ENCODE measurements at regions of chr17 and their contacts with region 1.

Region 1: GRCh38 chr17:27879987-27880608 is 13.1 kb downstream of the LYRM9 start:
- DNase-seq: peak; percentile 70 to 90
- ATAC-seq: peak; percentile 94 to 98
- H3K4me3 ChIP-seq: no peak overlapping the region
- H3K27ac ChIP-seq: no peak overlapping the region
- H3K4me1 ChIP-seq: no peaks in the 10 kb centered on the region
- CTCF ChIP-seq: peak; percentile 97
- EP300 ChIP-seq: no peak
- POLR2A ChIP-seq: no peak
- RAD21 ChIP-seq: peak; percentile 97 to 98

Region 2: DNA sequence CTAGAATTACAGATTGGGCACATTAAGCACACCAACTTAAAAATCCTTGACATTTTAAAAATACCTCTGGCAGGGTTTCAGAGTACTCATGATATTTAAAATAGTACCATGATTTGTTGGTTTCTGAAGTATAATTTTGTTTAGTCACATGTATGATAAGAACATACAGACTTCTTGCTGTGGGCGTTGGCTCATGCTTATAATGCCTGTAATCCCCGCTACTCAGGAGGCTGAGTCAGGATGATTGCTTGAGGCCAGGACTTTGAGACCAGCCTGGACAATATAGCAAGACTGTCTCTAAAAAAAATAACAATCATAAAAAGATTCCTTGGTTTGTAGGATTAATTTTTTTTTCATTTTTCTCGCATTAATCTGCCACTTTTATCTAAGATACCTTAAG is 158.3 kb before region 1 on chr17:
- CTCF ChIA-PET with region 1: no interaction called
- POLR2A ChIA-PET with region 1: no interaction called
- DNase-seq: no peak
- ATAC-seq: no peak
- H3K4me3 ChIP-seq: no peak overlapping the region
- H3K27ac ChIP-seq: no peak overlapping the region
- H3K4me1 ChIP-seq: no peaks in the 10 kb centered on the region
- CTCF ChIP-seq: no peak
- EP300 ChIP-seq: no peak
- POLR2A ChIP-seq: no peak
- RAD21 ChIP-seq: no peak

Region 3: DNA sequence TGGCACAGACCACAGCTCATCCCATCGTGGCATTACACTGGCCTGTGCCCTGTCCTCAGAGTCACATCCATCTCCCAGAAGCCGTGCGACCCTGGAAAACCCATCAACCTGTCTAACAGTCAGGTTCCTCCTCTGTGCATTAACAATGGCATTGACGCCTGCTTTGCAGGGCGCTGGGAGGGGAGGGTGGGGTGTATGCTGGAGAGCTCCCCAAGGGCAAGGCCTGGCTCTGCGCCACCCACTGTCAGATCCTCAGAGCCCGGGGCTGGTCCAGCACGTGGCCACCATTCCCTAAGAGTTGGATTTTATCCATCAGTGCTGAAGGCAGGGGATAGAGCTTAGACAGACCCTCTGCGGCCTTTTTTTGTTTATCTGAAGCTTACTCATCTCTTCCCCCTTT is 108.5 kb before region 1 on chr17:
- CTCF ChIA-PET with region 1: interaction called, 59 read pairs
- POLR2A ChIA-PET with region 1: no interaction called
- DNase-seq: no peak
- ATAC-seq: no peak
- H3K4me3 ChIP-seq: no peak overlapping the region
- H3K27ac ChIP-seq: no peak overlapping the region
- H3K4me1 ChIP-seq: no peaks in the 10 kb centered on the region
- CTCF ChIP-seq: no peak
- EP300 ChIP-seq: no peak
- POLR2A ChIP-seq: no peak
- RAD21 ChIP-seq: no peak

Region 4: GRCh38 chr17:27783440-27784350 is 96.4 kb before region 1 on chr17:
- CTCF ChIA-PET with region 1: interaction called, 18 read pairs
- POLR2A ChIA-PET with region 1: no interaction called
- DNase-seq: no peak
- ATAC-seq: no peak; a peak in 1 of 6 replicates
- H3K4me3 ChIP-seq: no peak overlapping the region
- H3K27ac ChIP-seq: no peak overlapping the region
- H3K4me1 ChIP-seq: peaks cover under 1% of the 10 kb centered on the region; the same call in 1 of the 3 replicates
- CTCF ChIP-seq: no peak
- EP300 ChIP-seq: no peak
- POLR2A ChIP-seq: no peak
- RAD21 ChIP-seq: no peak

Region 5: DNA sequence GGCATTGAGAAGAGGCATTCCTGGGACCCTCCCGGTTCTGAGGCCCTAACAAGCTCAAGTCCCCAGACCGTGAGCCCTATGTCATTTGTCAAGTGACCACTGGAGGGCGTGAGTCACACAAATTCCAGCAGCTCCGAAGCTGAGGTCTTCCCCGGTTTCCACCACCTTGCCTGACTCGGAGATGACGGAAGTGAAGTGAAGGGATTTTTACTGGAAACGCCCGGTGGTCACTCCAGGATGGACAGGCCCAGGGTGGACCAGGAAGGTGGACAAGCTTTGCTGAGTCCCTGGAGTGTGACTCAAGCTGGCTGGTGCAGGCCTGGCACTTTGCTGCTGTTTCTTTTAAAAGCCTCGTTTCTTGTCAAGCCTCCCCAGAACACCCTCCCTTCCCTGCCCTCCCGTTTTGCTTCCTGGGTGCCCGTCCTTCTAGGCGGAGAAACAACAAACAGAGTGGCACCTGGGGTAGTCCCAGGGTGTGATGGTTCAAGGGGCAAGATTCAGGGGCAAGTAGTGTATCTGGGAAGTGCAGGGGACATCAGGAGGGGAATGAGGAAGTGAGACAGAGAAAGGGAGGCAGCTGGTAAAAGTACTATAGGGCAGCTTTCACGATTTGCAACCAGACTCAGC is 74.5 kb before region 1 on chr17:
- CTCF ChIA-PET with region 1: interaction called, 474 read pairs
- POLR2A ChIA-PET with region 1: interaction called, 14 read pairs
- DNase-seq: peak; percentile 92 to 93
- ATAC-seq: peak; percentile 95 to 99
- H3K4me3 ChIP-seq: peak overlapping the region; percentile 28
- H3K27ac ChIP-seq: peak overlapping the region; percentile 73 to 86
- H3K4me1 ChIP-seq: peaks cover 3% of the 10 kb centered on the region; the same call in 1 of the 3 replicates
- CTCF ChIP-seq: peak; percentile 86
- EP300 ChIP-seq: no peak
- POLR2A ChIP-seq: no peak
- RAD21 ChIP-seq: peak; percentile 80 to 84

Region 6: GRCh38 chr17:27846042-27846655 is 33.9 kb before region 1 on chr17:
- CTCF ChIA-PET with region 1: interaction called, 52 read pairs
- POLR2A ChIA-PET with region 1: no interaction called
- DNase-seq: no peak
- ATAC-seq: no peak
- H3K4me3 ChIP-seq: no peak overlapping the region
- H3K27ac ChIP-seq: no peak overlapping the region
- H3K4me1 ChIP-seq: no peaks in the 10 kb centered on the region
- CTCF ChIP-seq: no peak
- EP300 ChIP-seq: no peak
- POLR2A ChIP-seq: no peak
- RAD21 ChIP-seq: no peak

Region 7: DNA sequence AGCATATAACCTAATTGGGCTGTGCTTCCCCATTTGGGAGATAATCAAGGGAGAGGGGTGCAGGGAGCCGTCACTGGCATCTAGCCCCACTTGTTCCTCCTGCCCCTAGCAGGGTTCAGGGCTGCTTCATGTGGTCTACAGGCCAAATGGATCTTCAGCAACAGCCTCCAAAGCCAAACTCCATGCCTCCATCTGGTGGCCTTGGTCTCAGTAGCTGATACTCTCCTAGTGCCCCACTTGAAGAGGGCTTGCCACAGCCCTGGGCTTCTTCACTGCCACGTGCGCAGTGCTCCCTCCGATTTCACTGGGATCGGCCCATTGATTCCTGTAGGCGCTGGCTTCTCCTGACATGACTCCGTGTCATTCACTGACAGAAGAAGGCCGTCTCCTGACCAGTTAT is 11.5 kb before region 1 on chr17:
- CTCF ChIA-PET with region 1: interaction called, 62 read pairs
- POLR2A ChIA-PET with region 1: no interaction called
- DNase-seq: no peak
- ATAC-seq: no peak
- H3K4me3 ChIP-seq: no peak overlapping the region
- H3K27ac ChIP-seq: no peak overlapping the region
- H3K4me1 ChIP-seq: no peaks in the 10 kb centered on the region
- CTCF ChIP-seq: no peak
- EP300 ChIP-seq: no peak
- POLR2A ChIP-seq: no peak
- RAD21 ChIP-seq: no peak

Region 8: DNA sequence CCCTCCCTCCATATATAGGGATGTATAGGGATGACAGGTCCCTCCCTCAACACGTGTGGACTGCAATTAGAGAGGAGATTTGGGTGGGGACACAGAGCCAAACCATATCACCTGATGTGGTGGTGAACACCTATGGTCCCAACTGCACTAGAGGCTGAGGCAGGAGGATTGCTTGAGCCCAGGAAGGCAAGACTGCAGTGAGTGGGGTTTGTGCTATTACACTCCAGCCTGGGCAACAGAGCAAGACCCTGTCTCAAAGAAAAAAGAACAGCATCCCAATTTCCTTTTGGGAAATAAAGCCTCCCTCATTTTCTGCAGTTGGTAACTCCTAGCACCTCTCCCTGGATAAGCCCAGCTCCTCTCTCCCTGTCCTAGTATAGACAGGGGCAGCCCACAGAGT is 36.9 kb after region 1 on chr17:
- CTCF ChIA-PET with region 1: no interaction called
- POLR2A ChIA-PET with region 1: no interaction called
- DNase-seq: no peak
- ATAC-seq: no peak
- H3K4me3 ChIP-seq: no peak overlapping the region
- H3K27ac ChIP-seq: no peak overlapping the region
- H3K4me1 ChIP-seq: no peaks in the 10 kb centered on the region
- CTCF ChIP-seq: no peak
- EP300 ChIP-seq: no peak
- POLR2A ChIP-seq: no peak
- RAD21 ChIP-seq: no peak

Region 9: GRCh38 chr17:28100936-28101335 is 220.8 kb after region 1 on chr17:
- CTCF ChIA-PET with region 1: no interaction called
- POLR2A ChIA-PET with region 1: no interaction called
- DNase-seq: no peak
- ATAC-seq: no peak
- H3K4me3 ChIP-seq: no peak overlapping the region
- H3K27ac ChIP-seq: no peak overlapping the region
- H3K4me1 ChIP-seq: peaks cover 10% of the 10 kb centered on the region; the same call in 2 of the 3 replicates
- CTCF ChIP-seq: no peak
- EP300 ChIP-seq: no peak
- POLR2A ChIP-seq: no peak
- RAD21 ChIP-seq: no peak

Measured in A549 (cell line).